ENCODE measurements at regions of chrX and their contacts with region 1.

Region 1: DNA sequence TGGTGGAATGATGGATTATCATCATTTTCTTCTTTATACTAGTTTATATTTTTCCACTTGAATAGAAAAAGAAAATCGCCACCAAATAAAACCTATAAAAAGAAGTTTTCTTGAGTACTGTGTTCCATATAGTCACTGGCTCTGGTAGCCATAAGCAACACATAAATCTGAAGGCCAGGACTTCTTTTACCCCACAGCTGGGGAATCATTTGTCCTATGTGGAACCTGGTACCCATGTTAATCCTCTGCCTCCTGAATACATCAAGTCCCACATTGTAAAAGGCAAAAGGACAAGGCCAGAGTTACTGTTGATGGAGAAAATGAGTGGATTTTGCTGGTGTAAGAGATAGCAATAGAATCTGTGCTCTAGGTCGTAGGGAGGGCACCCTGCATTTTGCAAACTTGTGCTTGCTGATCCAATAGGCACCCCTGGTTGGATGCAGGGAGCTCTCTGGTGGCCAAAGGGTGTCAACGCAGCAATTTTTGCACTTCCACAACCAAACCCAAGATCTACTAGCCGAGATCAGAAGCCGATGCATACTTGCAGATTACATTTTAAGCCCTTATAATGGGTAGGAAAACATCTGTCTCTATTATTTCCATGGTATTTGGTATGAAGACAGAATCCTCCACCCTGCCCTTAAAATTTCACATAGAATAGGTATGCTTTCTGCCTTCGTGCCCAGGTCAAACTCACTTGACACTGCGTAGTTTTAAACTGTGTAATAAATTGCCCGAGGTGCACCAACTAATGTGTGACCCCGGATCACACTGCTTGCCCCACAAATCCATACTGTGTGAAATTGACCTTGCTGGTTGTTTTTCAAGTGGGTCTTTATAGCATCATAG is 146.2 kb upstream of the SCML1 start:
- DNase-seq: peak; percentile 77
- H3K4me3 ChIP-seq: peak overlapping the region in 1 of 3 experiments; percentile 46
- H3K27ac ChIP-seq: peak overlapping the region; percentile 59
- H3K4me1 ChIP-seq: peaks cover 34% of the 10 kb centered on the region
- H3K27me3 ChIP-seq: no peaks in the 10 kb centered on the region
- CTCF ChIP-seq: peak; percentile 58 to 63
- POLR2A ChIP-seq: no peak

Region 2: GRCh38 chrX:16826207-16826606 is 764.9 kb before region 1 on chrX:
- CTCF ChIA-PET with region 1: interaction called, 8 read pairs
- POLR2A ChIA-PET with region 1: no interaction called
- dilution Hi-C with region 1: no loop called
- intact Hi-C with region 1: loop called (anchors 10 kb)
- DNase-seq: peak; percentile 50
- H3K4me3 ChIP-seq: no peak overlapping the region
- H3K27ac ChIP-seq: peak overlapping the region; percentile 25
- H3K4me1 ChIP-seq: peaks cover 38% of the 10 kb centered on the region
- H3K27me3 ChIP-seq: no peaks in the 10 kb centered on the region
- CTCF ChIP-seq: peak; percentile 12 to 27
- POLR2A ChIP-seq: no peak

Region 3: DNA sequence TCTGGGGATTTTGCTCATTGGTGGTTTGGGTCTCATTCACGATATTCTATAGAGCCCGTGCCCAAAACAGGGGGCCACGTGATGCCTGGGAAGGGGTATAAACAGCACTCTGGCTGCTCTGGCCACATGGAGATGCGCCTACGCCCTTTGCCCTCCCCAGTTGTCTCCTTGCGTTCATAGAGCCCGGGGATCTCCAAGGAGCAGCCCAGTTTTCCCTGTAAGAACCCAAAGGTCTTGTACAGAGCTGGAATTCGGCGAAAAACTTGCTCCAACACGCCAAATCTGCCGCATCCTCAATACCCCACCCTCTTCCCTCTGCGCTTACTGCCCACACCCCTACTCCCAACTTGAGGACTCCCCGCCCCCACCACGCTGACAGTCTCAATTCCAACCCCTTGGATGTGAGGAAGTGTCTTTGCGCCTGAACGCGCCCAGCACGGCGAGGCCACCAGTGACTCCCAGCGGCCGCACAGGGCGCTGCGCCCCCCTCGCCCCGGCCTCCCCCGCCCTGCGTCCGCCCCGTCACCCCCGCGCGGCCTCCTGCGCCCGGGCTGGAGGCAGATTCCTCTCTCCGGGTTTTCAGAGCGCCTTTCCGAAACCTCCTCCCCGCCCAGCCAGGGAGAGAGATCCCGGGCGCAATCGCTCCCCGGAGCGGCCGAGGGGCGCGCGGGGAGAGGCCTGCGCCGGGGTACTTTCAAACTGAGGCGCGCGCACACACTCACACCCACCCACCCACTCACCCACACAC is 216.3 kb before region 1 on chrX and contains the start of gene NHS:
- CTCF ChIA-PET with region 1: no interaction called
- POLR2A ChIA-PET with region 1: no interaction called
- dilution Hi-C with region 1: no loop called
- intact Hi-C with region 1: loop called (anchors 1 kb)
- DNase-seq: peak; percentile 15
- H3K4me3 ChIP-seq: peak within 1 kb of the TSS in 1 of 3 experiments; percentile 30
- H3K27ac ChIP-seq: no peak within 1 kb of the TSS
- H3K4me1 ChIP-seq: no peaks in the 10 kb centered on the region
- H3K27me3 ChIP-seq: peaks cover 13 to 29% of the 10 kb centered on the region in 2 experiments
- CTCF ChIP-seq: peak in 1 of 2 donors; percentile 25
- POLR2A ChIP-seq: no peak
- total RNA-seq, gene NHS: 0.46 and 1.1 TPM in 2 replicates

Region 4: DNA sequence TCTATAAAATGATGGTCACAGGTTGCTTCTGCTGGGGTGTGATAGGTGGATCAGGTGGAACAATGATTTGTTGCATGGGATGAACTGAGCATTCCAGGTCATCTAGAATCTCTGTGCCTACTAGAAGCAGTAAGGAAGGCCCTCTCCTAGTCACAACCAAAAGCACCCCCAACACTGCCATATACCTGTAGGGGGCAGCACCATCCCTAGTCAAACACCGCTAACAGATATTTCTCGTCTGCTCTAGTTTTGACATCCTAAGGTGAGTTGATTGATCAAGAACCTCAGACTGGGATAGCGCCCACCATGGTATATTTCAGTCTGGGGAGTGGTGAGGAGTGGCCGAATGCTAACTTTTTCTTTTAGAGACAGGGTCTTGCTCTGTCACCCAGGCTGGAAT is 55.9 kb before region 1 on chrX:
- CTCF ChIA-PET with region 1: interaction called, 36 read pairs
- POLR2A ChIA-PET with region 1: no interaction called
- dilution Hi-C with region 1: no loop called
- intact Hi-C with region 1: loop called (anchors 1 kb)
- DNase-seq: peak; percentile 49
- H3K4me3 ChIP-seq: no peak overlapping the region
- H3K27ac ChIP-seq: no peak overlapping the region
- H3K4me1 ChIP-seq: no peaks in the 10 kb centered on the region
- H3K27me3 ChIP-seq: peaks cover 0 to 2% of the 10 kb centered on the region in 2 experiments
- CTCF ChIP-seq: peak; percentile 45 to 51
- POLR2A ChIP-seq: no peak

Region 5: GRCh38 chrX:17559728-17560379 is 31.3 kb before region 1 on chrX:
- CTCF ChIA-PET with region 1: interaction called, 10 read pairs
- POLR2A ChIA-PET with region 1: no interaction called
- dilution Hi-C with region 1: no loop called
- intact Hi-C with region 1: no loop called
- DNase-seq: peak; percentile 59
- H3K4me3 ChIP-seq: no peak overlapping the region
- H3K27ac ChIP-seq: no peak overlapping the region
- H3K4me1 ChIP-seq: no peaks in the 10 kb centered on the region
- H3K27me3 ChIP-seq: no peaks in the 10 kb centered on the region
- CTCF ChIP-seq: no peak
- POLR2A ChIP-seq: no peak

Region 6: GRCh38 chrX:17632942-17633341 is 41.8 kb after region 1 on chrX:
- CTCF ChIA-PET with region 1: interaction called, 9 read pairs
- POLR2A ChIA-PET with region 1: no interaction called
- dilution Hi-C with region 1: no loop called
- intact Hi-C with region 1: loop called (anchors 1 kb)
- DNase-seq: peak; percentile 60
- H3K4me3 ChIP-seq: no peak overlapping the region
- H3K27ac ChIP-seq: peak overlapping the region; percentile 69
- H3K4me1 ChIP-seq: peaks cover 45% of the 10 kb centered on the region
- H3K27me3 ChIP-seq: no peaks in the 10 kb centered on the region
- CTCF ChIP-seq: no peak
- POLR2A ChIP-seq: no peak

Region 7: GRCh38 chrX:17736856-17737706 is 146.0 kb after region 1 on chrX and contains the start of gene SCML1:
- CTCF ChIA-PET with region 1: no interaction called
- POLR2A ChIA-PET with region 1: no interaction called
- dilution Hi-C with region 1: no loop called
- intact Hi-C with region 1: loop called (anchors 2 kb)
- DNase-seq: peak; percentile 97
- H3K4me3 ChIP-seq: peak within 1 kb of the TSS; percentile 61 to 88 (median 63)
- H3K27ac ChIP-seq: peak within 1 kb of the TSS; percentile 77
- H3K4me1 ChIP-seq: no peaks in the 10 kb centered on the region
- H3K27me3 ChIP-seq: no peaks in the 10 kb centered on the region
- CTCF ChIP-seq: no peak
- POLR2A ChIP-seq: no peak
- total RNA-seq, gene SCML1: 10.1 and 12.4 TPM in 2 replicates

Measured in endothelial cell of umbilical vein (primary cell).